Activated CD4-positive, alpha-beta memory T cell treated with anti-CD3 and anti-CD28 coated beads, Interleukin-2, amount 10 ng/mL, durations not matched to agents 7 days and 5 days (primary cell): ENCODE measurements at regions of chr1 and their contacts with region 1.

Region 1: GRCh38 chr1:28926629-28927265 is 12.4 kb downstream of the EPB41 start:
- DNase-seq: peak; percentile 40
- H3K4me3 Mint-ChIP-seq: peak overlapping the region; percentile 50
- H3K27ac Mint-ChIP-seq: peak overlapping the region; percentile 89
- H3K4me1 Mint-ChIP-seq: peaks cover 44% of the 10 kb centered on the region
- H3K27me3 Mint-ChIP-seq: no peaks in the 10 kb centered on the region

Region 2: DNA sequence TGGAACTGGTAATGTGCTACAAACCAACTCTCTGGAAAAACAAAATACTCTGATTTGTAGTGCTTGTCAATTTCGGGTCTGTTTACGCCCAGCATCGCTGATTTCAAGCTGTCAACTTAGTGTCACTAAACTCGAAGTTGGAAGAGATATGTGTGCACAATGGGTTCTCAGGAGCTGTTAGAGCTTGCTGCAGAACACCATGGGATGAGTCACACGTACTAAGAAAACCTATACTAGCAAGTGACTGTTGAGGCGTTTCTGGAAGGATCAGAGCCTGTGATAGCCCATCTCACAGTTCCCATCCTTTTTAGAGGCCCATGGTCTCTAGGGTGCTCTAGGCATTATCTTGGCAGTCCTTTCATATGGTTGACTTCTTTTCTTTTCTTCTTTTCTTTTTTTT is 243.9 kb before region 1 on chr1:
- CTCF ChIA-PET with region 1: no interaction called
- POLR2A ChIA-PET with region 1: no interaction called
- DNase-seq: no peak
- H3K4me3 Mint-ChIP-seq: no peak overlapping the region
- H3K27ac Mint-ChIP-seq: no peak overlapping the region
- H3K4me1 Mint-ChIP-seq: peaks cover 6% of the 10 kb centered on the region
- H3K27me3 Mint-ChIP-seq: no peaks in the 10 kb centered on the region

Region 3: GRCh38 chr1:28914228-28915030 is 12.3 kb before region 1 on chr1 and contains the start of gene EPB41:
- CTCF ChIA-PET with region 1: interaction called, 3 read pairs
- POLR2A ChIA-PET with region 1: interaction called, 95 read pairs
- DNase-seq: peak; percentile 90
- H3K4me3 Mint-ChIP-seq: peak within 1 kb of the TSS; percentile 89
- H3K27ac Mint-ChIP-seq: peak within 1 kb of the TSS; percentile 88
- H3K4me1 Mint-ChIP-seq: peaks cover 41% of the 10 kb centered on the region
- H3K27me3 Mint-ChIP-seq: no peaks in the 10 kb centered on the region
- total RNA-seq, gene EPB41: 95.0 to 97.6 TPM

Region 4: DNA sequence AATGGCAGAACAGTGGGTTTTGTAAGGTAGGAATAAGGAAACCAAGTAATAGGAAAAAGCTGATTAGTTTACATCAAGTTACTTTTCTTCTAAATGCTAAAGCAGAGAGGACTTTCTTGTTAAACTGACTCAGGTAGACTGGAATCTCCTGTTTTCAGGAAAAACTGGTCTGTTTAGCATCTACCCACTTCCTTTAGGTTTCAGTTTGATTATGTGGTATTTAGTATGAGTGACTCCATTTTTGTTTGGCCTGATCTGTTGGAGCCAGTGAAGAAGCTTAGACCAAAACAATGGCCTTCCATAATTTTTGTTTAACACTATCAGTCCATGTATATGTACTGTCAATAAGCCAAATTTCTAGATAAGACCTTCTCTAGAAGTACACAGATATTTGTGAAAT is 76.0 kb after region 1 on chr1:
- CTCF ChIA-PET with region 1: no interaction called
- POLR2A ChIA-PET with region 1: no interaction called
- DNase-seq: no peak
- H3K4me3 Mint-ChIP-seq: no peak overlapping the region
- H3K27ac Mint-ChIP-seq: no peak overlapping the region
- H3K4me1 Mint-ChIP-seq: peaks cover 5% of the 10 kb centered on the region
- H3K27me3 Mint-ChIP-seq: no peaks in the 10 kb centered on the region